ENCODE measurements at regions of chr4 and their contacts with region 1.

Region 1: GRCh38 chr4:931194-931959 is 739 bp downstream of the GAK start:
- DNase-seq: peak; percentile 30
- H3K27ac ChIP-seq: peak overlapping the region; percentile 79
- CTCF ChIP-seq: no peak

Region 2: DNA sequence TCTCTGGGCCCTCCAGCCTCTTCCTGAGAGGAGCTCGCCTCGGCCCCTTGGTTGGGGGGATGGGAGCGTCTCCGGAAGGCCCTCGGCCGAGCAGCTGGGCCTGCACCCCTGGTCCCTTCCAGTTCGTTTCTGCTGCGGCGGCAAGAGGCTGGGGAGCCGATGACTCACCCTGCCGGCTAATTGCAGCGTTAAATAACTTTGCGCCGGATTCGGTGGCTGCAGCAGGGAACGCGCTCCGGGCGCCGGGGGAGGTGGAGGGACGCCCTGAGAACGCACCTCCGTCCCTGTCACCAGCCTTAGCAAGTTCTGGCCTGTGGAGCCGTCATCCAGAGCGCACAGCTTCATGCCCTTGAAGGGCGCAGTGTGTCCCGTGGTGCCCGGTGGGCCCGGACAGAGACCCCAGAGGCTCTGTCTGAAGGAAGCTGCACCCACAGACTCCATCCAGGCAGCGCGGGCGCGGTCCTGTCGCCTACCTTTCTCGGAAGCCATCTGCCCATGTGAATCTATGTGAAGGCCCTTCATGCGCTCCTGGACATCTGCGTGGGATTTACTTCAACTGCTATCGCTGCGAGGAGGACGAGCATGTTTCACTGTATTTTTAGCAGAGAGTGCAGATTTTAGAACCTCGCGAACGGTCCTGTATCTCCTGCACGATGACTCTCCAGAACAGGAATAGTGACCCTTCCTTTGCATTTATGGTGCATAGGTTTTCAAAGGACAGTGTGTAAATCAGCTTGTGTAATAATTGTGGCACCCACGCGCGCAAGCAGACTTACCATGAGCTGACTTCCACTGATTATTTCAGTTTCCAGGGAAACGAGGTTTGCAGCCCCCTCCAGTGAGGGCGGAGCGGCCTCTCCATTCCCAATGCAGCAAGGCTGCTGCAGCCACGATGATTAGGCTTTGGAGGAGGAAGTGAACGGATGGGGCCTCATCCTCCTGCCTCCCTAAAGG is 353.6 kb before region 1 on chr4:
- CTCF ChIA-PET with region 1: no interaction called
- POLR2A ChIA-PET with region 1: no interaction called
- DNase-seq: peak; percentile 37
- H3K27ac ChIP-seq: no peak overlapping the region
- CTCF ChIP-seq: no peak

Region 3: GRCh38 chr4:875818-876423 is 55.5 kb before region 1 on chr4:
- CTCF ChIA-PET with region 1: interaction called, 14 read pairs
- POLR2A ChIA-PET with region 1: no interaction called
- DNase-seq: no peak
- H3K27ac ChIP-seq: no peak overlapping the region
- CTCF ChIP-seq: no peak